Psoas muscle (tissue), 8 donors: ENCODE measurements at regions of chr6 and their contacts with region 1.

Region 1: GRCh38 chr6:139881728-139882211 is 507.3 kb upstream of the CITED2 start:
- DNase-seq: no peak
- ATAC-seq: peak; percentile 55 to 72 (median 66)
- H3K4me3 ChIP-seq: peak overlapping the region; percentile 49
- H3K27ac ChIP-seq: peak overlapping the region; percentile 83
- H3K4me1 ChIP-seq: peaks cover 25% of the 10 kb centered on the region
- H3K27me3 ChIP-seq: no peaks in the 10 kb centered on the region
- CTCF ChIP-seq: peak; percentile 64

Region 2: DNA sequence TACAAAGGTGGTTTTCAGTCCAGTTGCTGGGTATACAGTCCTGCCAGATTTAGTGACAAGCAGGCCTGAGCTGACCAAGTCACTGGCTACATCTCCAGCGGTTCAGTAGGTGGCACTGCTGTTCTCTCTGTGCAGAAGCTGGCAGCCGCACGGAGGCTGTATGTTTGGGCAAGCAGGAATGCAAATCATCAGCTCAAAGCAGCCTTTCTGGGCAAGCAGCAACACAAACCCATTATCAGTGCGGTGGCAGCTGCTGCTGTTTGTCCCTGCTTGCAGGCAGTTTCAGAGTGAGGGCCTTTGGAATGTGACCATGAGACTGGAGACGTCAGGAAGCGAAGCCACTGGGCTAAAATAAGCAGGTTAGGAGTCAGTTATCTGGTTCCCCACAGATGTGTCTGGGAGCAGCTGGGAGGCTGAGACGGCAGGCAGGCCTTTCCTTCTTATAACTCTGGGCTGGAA is 662.5 kb before region 1 on chr6:
- intact Hi-C with region 1: no loop called
- DNase-seq: peak; percentile 78 to 89
- ATAC-seq: peak; percentile 99
- H3K4me3 ChIP-seq: peak overlapping the region; percentile 19
- H3K27ac ChIP-seq: peak overlapping the region; percentile 84
- H3K4me1 ChIP-seq: peaks cover 10% of the 10 kb centered on the region
- H3K27me3 ChIP-seq: no peaks in the 10 kb centered on the region
- CTCF ChIP-seq: peak; percentile 83

Region 3: GRCh38 chr6:139644821-139645220 is 236.9 kb before region 1 on chr6:
- intact Hi-C with region 1: no loop called
- DNase-seq: no peak
- ATAC-seq: peak in 1 of 4 donors; percentile 58
- H3K4me3 ChIP-seq: no peak overlapping the region
- H3K27ac ChIP-seq: no peak overlapping the region
- H3K4me1 ChIP-seq: peaks cover 5% of the 10 kb centered on the region
- H3K27me3 ChIP-seq: no peaks in the 10 kb centered on the region
- CTCF ChIP-seq: no peak

Region 4: GRCh38 chr6:139812939-139813338 is 68.8 kb before region 1 on chr6:
- intact Hi-C with region 1: no loop called
- DNase-seq: no peak
- ATAC-seq: no peak
- H3K4me3 ChIP-seq: no peak overlapping the region
- H3K27ac ChIP-seq: no peak overlapping the region
- H3K4me1 ChIP-seq: no peaks in the 10 kb centered on the region
- H3K27me3 ChIP-seq: no peaks in the 10 kb centered on the region
- CTCF ChIP-seq: no peak

Region 5: GRCh38 chr6:140441256-140441655 is 559.5 kb after region 1 on chr6:
- intact Hi-C with region 1: loop called in 1 of 2 experiments (anchors 5 kb)
- DNase-seq: peak; percentile 25 to 68
- ATAC-seq: peak; percentile 83 to 95 (median 84)
- H3K4me3 ChIP-seq: no peak overlapping the region
- H3K27ac ChIP-seq: peak overlapping the region; percentile 17
- H3K4me1 ChIP-seq: peaks cover 31% of the 10 kb centered on the region
- H3K27me3 ChIP-seq: no peaks in the 10 kb centered on the region
- CTCF ChIP-seq: peak; percentile 59